ENCODE measurements at regions of chr2 and their contacts with region 1.

Region 1: GRCh38 chr2:25376750-25377621 is 35.3 kb upstream of the DNMT3A start:
- DNase-seq: peak; percentile 90
- H3K4me3 ChIP-seq: no peak overlapping the region
- H3K27ac ChIP-seq: peak overlapping the region in 1 of 3 donors; percentile 15
- H3K4me1 ChIP-seq: peaks cover 8 to 23% of the 10 kb centered on the region in 2 donors
- H3K27me3 ChIP-seq: no peaks in the 10 kb centered on the region
- CTCF ChIP-seq: peak; percentile 32 to 97 (median 91)
- POLR2A ChIP-seq: peak in 1 of 2 donors; percentile 3

Region 2: DNA sequence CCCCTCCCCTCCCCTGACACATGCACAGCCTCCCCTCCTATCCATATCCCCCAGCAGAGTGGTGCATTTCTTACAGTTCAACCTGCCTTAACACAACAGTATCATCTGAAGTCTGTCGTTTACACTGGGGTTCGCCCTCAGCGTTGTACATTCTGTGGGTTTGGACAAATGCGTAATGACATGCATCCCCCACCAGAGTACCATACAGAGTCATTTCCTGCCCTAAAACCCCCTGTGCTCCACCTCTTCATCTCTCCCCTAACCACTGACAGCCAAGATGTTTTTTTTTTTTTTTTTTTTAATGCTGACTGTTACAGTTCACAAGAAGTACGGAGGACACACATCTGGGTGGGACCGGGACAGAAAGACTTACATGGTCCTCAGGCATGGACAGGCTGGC is 231.2 kb before region 1 on chr2:
- intact Hi-C with region 1: no loop called
- DNase-seq: no peak
- H3K4me3 ChIP-seq: no peak overlapping the region
- H3K27ac ChIP-seq: no peak overlapping the region
- H3K4me1 ChIP-seq: no peaks in the 10 kb centered on the region
- H3K27me3 ChIP-seq: no peaks in the 10 kb centered on the region
- CTCF ChIP-seq: no peak
- POLR2A ChIP-seq: no peak

Region 3: DNA sequence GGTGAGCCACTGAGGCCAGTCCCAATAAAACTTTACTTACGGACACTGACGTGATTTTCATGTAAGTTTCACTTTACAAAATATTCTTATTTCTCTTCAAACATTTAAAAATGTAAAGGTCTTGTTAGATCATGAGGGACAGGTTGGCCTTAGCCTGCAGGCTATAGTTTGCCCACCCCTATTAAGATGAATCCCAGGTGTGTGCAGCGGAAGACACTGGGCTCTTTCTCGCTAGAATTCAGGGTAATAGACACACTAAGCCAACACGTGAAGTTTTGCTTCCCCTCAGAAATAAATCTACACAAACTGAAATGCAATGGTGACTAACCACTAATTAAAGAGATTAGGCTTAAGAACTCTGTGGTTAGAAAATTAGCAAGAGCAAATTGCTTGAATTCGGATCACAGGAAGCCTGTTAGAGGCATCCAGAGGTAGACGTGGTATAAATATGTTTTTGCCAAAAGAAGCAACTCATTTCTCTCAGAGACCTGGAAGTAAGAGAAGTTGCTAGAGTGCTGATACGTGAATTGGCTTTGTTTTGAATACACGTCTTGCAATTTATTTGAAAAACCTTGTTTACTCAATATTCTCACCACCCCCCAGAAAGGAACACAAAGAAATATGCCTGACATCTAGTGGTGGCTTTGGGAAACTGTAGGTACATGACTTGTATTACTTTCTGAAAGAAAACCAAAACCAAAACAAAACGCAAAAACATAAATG is 144.8 kb after region 1 on chr2:
- intact Hi-C with region 1: loop called (anchors 10 kb)
- DNase-seq: no peak
- H3K4me3 ChIP-seq: no peak overlapping the region
- H3K27ac ChIP-seq: no peak overlapping the region
- H3K4me1 ChIP-seq: peaks cover 7 to 8% of the 10 kb centered on the region in 2 donors
- H3K27me3 ChIP-seq: no peaks in the 10 kb centered on the region
- CTCF ChIP-seq: peak; percentile 65 to 95 (median 86)
- POLR2A ChIP-seq: no peak

Region 4: DNA sequence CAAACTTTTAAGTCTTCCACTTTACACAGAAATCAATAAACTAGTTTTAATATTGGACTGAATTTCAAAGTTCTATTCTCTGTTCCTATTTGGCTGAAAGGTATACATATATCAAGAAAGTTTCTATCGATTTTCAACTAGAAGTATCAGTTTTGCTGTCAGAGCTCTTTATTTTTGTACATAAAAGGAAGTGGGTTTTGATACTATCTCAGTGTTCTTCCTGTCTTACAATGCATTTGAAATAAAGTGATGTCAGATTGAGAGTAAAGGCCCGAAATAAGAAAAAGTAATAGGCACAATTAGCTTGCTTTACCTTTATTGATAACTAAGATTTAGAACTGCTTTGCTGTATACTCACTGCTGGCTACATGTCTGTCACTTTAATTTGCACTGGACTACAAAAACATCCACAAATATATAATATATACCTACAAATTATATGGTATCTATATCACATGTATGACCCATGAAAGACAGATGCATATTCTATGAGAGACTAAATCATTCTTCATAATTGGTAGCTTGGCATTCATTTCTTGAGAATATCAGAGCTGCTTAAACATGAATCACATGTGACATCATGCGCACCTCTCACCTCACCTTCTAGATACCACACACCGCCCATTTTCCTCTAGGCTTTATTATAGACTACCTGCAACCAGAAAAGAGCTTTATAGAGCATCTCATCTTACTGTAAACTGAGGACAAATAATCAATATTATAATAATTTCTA is 417.7 kb after region 1 on chr2:
- intact Hi-C with region 1: no loop called
- DNase-seq: no peak
- H3K4me3 ChIP-seq: no peak overlapping the region
- H3K27ac ChIP-seq: no peak overlapping the region
- H3K4me1 ChIP-seq: no peaks in the 10 kb centered on the region
- H3K27me3 ChIP-seq: no peaks in the 10 kb centered on the region
- CTCF ChIP-seq: no peak
- POLR2A ChIP-seq: no peak